Vagina (tissue), 2 donors: ENCODE measurements at regions of chr17 and their contacts with region 1.

Region 1: GRCh38 chr17:54771409-54771808 is 129.2 kb upstream of the TOM1L1 start:
- DNase-seq: no peak
- H3K4me3 ChIP-seq: no peak overlapping the region
- H3K27ac ChIP-seq: no peak overlapping the region
- H3K4me1 ChIP-seq: no peaks in the 10 kb centered on the region
- H3K27me3 ChIP-seq: no peaks in the 10 kb centered on the region
- CTCF ChIP-seq: no peak
- POLR2A ChIP-seq: no peak

Region 2: DNA sequence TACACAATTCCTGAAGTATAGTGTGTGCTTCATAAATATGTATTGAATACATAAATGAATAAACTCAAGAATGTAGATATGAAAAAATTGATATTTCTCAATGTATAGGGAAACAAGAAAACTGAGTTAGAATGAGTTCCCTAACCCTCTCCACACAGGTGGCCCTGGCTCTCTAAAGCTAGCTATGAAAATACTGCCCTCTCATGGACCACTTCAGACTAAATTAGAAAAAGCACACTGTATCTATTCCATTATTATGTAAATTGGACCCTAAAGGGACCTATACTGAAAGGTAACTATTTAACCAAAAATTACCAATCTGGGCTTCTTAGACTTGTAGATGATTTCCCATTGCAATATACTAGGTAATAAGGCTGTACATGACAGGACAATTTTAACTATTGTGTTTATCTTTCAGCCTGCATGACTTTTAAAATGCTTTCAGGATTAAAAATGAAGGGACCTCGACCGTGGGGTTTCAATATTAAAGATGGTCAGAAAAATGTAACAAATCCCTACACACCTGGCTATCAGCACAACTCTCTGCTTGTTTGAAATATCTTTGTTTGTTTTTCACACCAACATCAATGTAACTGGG is 1621.2 kb before region 1 on chr17:
- intact Hi-C with region 1: loop called (anchors 5 kb)
- DNase-seq: no peak
- H3K4me3 ChIP-seq: no peak overlapping the region
- H3K27ac ChIP-seq: no peak overlapping the region
- H3K4me1 ChIP-seq: no peaks in the 10 kb centered on the region
- H3K27me3 ChIP-seq: no peaks in the 10 kb centered on the region
- CTCF ChIP-seq: no peak
- POLR2A ChIP-seq: no peak